Adrenal gland (tissue), 19 donors: ENCODE measurements at regions of chr7 and their contacts with region 1.

Region 1: GRCh38 chr7:149005241-149006050 is 22.9 kb downstream of the PDIA4 start:
- DNase-seq: peak; percentile 73 to 93 (median 83)
- H3K4me3 ChIP-seq: no peak overlapping the region
- H3K27ac ChIP-seq: no peak overlapping the region
- H3K4me1 ChIP-seq: no peaks in the 10 kb centered on the region
- H3K27me3 ChIP-seq: no peaks in the 10 kb centered on the region
- CTCF ChIP-seq: peak; percentile 80 to 92 (median 87)
- POLR2A ChIP-seq: no peak

Region 2: DNA sequence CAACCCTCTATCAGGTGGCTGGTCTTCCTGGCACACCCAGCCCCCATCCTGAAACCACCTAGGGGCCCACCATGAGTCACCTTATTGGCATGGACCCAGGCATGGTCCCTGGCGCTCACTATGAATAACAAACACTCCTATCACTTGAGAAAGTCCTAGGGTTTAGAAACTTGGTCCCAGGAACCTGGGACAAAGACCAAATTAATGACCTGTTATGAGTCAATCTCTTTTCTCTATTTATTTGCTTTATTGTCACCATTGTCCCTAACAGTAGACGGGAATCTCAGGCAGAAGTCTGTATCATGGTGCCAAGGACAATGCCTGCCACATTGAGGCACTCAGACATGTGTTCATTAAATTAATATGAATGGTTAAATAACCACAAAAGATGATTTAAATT is 1014.5 kb before region 1 on chr7:
- intact Hi-C with region 1: no loop called
- DNase-seq: no peak
- H3K4me3 ChIP-seq: no peak overlapping the region
- H3K27ac ChIP-seq: no peak overlapping the region
- H3K4me1 ChIP-seq: no peaks in the 10 kb centered on the region
- H3K27me3 ChIP-seq: no peaks in the 10 kb centered on the region
- CTCF ChIP-seq: no peak
- POLR2A ChIP-seq: no peak

Region 3: GRCh38 chr7:148793590-148793989 is 211.9 kb before region 1 on chr7:
- intact Hi-C with region 1: no loop called
- DNase-seq: no peak
- H3K4me3 ChIP-seq: no peak overlapping the region
- H3K27ac ChIP-seq: no peak overlapping the region
- H3K4me1 ChIP-seq: no peaks in the 10 kb centered on the region
- H3K27me3 ChIP-seq: no peaks in the 10 kb centered on the region
- CTCF ChIP-seq: no peak
- POLR2A ChIP-seq: no peak

Region 4: GRCh38 chr7:148940702-148941597 is 64.5 kb before region 1 on chr7:
- intact Hi-C with region 1: no loop called
- DNase-seq: peak; percentile 73 to 92 (median 85)
- H3K4me3 ChIP-seq: peak overlapping the region; percentile 16 to 88 (median 58)
- H3K27ac ChIP-seq: peak overlapping the region; percentile 39 to 93 (median 83)
- H3K4me1 ChIP-seq: peaks cover 6 to 19% of the 10 kb centered on the region in 2 donors
- H3K27me3 ChIP-seq: no peaks in the 10 kb centered on the region
- CTCF ChIP-seq: no peak
- POLR2A ChIP-seq: peak; percentile 10 to 67

Region 5: GRCh38 chr7:149067876-149068275 is 62.4 kb after region 1 on chr7:
- intact Hi-C with region 1: loop called (anchors 2 to 10 kb)
- DNase-seq: no peak
- H3K4me3 ChIP-seq: no peak overlapping the region
- H3K27ac ChIP-seq: no peak overlapping the region
- H3K4me1 ChIP-seq: no peaks in the 10 kb centered on the region
- H3K27me3 ChIP-seq: no peaks in the 10 kb centered on the region
- CTCF ChIP-seq: no peak
- POLR2A ChIP-seq: no peak

Region 6: DNA sequence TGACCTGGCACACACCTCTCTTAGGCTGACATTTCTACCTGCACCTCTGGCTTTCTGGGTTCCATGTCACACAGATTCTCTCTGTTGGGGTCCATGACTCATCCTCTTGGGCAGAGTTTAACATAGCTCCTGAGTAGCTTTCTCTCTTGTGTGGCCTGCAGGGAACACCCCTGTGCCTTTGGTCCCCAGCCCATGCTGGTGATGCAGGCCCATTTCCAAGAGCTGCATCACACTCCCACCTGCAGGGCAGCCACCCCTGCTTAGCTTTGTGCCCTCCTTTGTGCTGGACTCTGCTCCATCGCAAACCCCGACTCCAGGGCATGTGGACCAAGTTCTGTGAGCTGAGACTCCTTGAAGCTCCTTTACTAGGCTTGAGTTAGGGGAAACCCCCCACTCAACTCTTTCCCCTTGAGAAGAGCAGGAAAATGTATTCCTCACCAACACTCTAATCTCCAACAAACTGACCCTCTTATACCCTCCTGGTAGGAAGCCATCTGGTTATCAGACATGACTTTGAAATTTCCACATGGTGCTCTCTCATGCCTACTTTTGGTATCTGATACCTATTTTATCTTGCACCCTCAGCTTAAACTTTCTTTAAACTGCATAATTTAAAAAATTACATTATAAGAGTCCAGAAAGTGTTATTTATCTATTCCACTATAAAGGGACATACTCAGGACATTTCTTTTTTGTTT is 362.2 kb after region 1 on chr7:
- intact Hi-C with region 1: no loop called
- DNase-seq: no peak
- H3K4me3 ChIP-seq: no peak overlapping the region
- H3K27ac ChIP-seq: no peak overlapping the region
- H3K4me1 ChIP-seq: no peaks in the 10 kb centered on the region
- H3K27me3 ChIP-seq: no peaks in the 10 kb centered on the region
- CTCF ChIP-seq: no peak
- POLR2A ChIP-seq: no peak